Ascending aorta (tissue), 2 donors: ENCODE measurements at regions of chr1 and their contacts with region 1.

Region 1: DNA sequence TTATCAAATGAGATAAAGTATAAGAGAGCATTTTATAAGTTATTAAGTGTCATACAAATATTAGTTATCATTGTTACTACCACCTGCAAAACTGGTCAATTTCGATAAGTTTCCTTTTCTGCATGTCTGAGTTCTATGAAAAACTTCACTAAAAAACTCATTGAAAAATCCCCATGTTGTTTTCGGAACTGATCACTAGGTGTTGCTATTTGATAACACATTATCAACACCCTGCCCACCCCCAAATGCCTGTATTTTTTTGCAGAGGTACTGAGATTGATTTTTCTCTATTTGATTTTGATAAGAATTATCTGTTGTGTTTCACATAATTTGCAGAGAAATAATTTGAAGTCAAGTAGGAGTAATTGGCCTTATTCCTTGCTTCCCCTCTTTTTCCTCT is 22.1 kb upstream of the DISP1 start:
- DNase-seq: no peak
- H3K4me3 ChIP-seq: no peak overlapping the region
- H3K27ac ChIP-seq: no peak overlapping the region
- H3K4me1 ChIP-seq: no peaks in the 10 kb centered on the region
- H3K27me3 ChIP-seq: no peaks in the 10 kb centered on the region
- CTCF ChIP-seq: peak; percentile 48 to 67 (median 51)

Region 2: DNA sequence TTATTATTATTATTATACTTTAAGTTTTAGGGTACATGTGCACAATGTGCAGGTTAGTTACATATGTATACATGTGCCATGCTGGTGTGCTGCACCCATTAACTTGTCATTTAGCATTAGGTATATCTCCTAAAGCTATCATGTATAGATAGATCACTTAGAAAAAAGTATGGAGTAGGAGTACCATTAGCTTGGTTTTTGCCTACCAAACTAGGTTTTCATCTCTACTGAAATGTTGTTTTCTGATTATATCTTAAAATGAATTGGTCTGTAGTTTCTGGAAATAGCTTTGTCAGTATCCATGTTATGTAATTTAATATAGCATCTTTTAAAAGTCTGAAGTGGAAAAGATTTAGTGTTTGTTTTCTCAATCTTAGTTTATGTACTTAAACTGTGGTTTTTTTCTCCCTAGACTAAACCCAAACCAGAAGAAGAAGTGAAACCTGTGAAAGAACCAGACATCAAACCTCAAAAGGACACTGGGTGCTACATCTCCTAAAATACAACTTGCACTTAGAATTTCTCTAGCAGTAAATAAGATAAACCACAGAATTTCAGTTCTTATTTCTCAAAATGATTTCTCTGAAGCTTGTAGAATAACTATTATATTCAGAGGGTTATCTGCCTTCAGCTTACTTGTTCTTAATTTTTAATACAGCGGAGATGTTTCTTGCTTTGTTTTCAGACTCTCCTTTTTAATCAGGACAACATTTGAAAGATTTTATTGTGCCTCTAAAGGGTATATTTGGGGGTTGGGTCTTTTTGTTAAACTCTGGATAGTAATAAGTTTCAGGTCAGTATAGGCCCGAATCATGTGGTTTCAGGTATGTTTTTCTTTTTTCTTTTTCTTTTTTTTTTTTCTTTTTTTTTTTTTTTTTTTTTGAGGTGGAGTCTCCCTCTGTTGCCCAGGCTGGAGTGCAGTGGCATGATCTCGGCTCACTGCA is 60.3 kb before region 1 on chr1:
- intact Hi-C with region 1: loop called (anchors 2 kb)
- DNase-seq: no peak
- H3K4me3 ChIP-seq: no peak overlapping the region
- H3K27ac ChIP-seq: no peak overlapping the region
- H3K4me1 ChIP-seq: no peaks in the 10 kb centered on the region
- H3K27me3 ChIP-seq: no peaks in the 10 kb centered on the region
- CTCF ChIP-seq: no peak

Region 3: DNA sequence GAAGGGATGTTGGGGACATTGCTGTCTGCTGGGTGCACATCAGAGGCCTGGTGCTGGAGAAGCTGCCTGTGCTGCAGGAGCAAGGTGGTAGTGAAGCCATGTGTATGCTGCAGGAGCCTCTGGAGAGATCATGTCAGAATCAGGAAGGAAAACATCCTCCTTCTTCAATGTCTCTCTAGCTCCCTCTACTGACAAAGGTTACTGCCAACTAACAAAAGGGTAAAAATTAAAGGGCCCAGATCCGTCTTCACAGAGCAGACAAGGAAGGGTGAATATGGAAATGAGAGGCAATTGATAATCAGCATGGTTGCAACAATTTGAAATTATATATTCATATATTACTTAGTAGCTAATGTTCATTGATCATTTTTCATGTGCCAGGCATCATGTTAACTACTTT is 23.6 kb before region 1 on chr1:
- intact Hi-C with region 1: no loop called
- DNase-seq: no peak
- H3K4me3 ChIP-seq: no peak overlapping the region
- H3K27ac ChIP-seq: no peak overlapping the region
- H3K4me1 ChIP-seq: no peaks in the 10 kb centered on the region
- H3K27me3 ChIP-seq: no peaks in the 10 kb centered on the region
- CTCF ChIP-seq: no peak

Region 4: GRCh38 chr1:223081181-223081994 is 288.6 kb after region 1 on chr1:
- intact Hi-C with region 1: loop called (anchors 1 kb)
- DNase-seq: peak; percentile 55 to 90
- H3K4me3 ChIP-seq: peak overlapping the region; percentile 51 to 58
- H3K27ac ChIP-seq: peak overlapping the region; percentile 60 to 67
- H3K4me1 ChIP-seq: no peaks in the 10 kb centered on the region
- H3K27me3 ChIP-seq: no peaks in the 10 kb centered on the region
- CTCF ChIP-seq: peak; percentile 92 to 98 (median 98)

Region 5: GRCh38 chr1:223123011-223123610 is 330.4 kb after region 1 on chr1:
- intact Hi-C with region 1: loop called (anchors 2 kb)
- DNase-seq: no peak
- H3K4me3 ChIP-seq: peak overlapping the region; percentile 46 to 56
- H3K27ac ChIP-seq: peak overlapping the region; percentile 5 to 15
- H3K4me1 ChIP-seq: no peaks in the 10 kb centered on the region
- H3K27me3 ChIP-seq: no peaks in the 10 kb centered on the region
- CTCF ChIP-seq: no peak

Region 6: GRCh38 chr1:223289621-223290020 is 496.9 kb after region 1 on chr1:
- intact Hi-C with region 1: no loop called
- DNase-seq: no peak
- H3K4me3 ChIP-seq: no peak overlapping the region
- H3K27ac ChIP-seq: no peak overlapping the region
- H3K4me1 ChIP-seq: no peaks in the 10 kb centered on the region
- H3K27me3 ChIP-seq: no peaks in the 10 kb centered on the region
- CTCF ChIP-seq: no peak